ENCODE measurements at regions of chr14 and their contacts with region 1.

Region 1: GRCh38 chr14:64294672-64295413 is 672 bp upstream of the ESR2 start:
- DNase-seq: peak; percentile 42 to 72
- ATAC-seq: peak; percentile 84 to 90
- H3K4me3 ChIP-seq: peak overlapping the region; percentile 43 to 61 (median 50)
- H3K27ac ChIP-seq: peak overlapping the region in 1 of 4 donors; percentile 27
- H3K4me1 ChIP-seq: peaks cover 9 to 10% of the 10 kb centered on the region in 2 donors
- H3K27me3 ChIP-seq: no peaks in the 10 kb centered on the region
- CTCF ChIP-seq: peak; percentile 59 to 92 (median 87)
- POLR2A ChIP-seq: no peak

Region 2: DNA sequence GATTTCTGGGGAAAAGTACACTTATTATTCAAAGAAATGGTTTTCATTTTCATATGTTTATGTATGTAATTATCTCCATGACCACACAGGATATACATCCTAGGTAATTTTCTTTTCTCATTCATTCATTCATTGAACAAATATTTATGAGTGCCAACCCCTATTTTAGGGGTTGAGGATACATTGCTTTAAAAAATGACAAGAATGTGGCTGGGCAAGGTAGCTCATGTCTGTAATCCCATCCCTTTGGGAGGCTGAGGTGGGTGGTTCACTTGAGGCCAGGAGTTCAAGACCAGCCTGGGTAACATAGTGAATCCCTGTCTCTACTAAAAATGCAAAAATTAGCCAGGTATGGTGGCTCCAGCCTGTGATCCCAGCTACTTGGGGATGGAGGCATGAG is 607.9 kb before region 1 on chr14:
- in situ Hi-C with region 1: no loop called
- intact Hi-C with region 1: no loop called
- DNase-seq: no peak
- ATAC-seq: no peak
- H3K4me3 ChIP-seq: no peak overlapping the region
- H3K27ac ChIP-seq: no peak overlapping the region
- H3K4me1 ChIP-seq: no peaks in the 10 kb centered on the region
- H3K27me3 ChIP-seq: no peaks in the 10 kb centered on the region
- CTCF ChIP-seq: no peak
- POLR2A ChIP-seq: no peak

Region 3: GRCh38 chr14:64012720-64013119 is 282.1 kb before region 1 on chr14:
- in situ Hi-C with region 1: no loop called
- intact Hi-C with region 1: loop called (anchors 5 kb)
- DNase-seq: no peak
- ATAC-seq: no peak
- H3K4me3 ChIP-seq: no peak overlapping the region
- H3K27ac ChIP-seq: no peak overlapping the region
- H3K4me1 ChIP-seq: no peaks in the 10 kb centered on the region
- H3K27me3 ChIP-seq: no peaks in the 10 kb centered on the region
- CTCF ChIP-seq: no peak
- POLR2A ChIP-seq: no peak

Region 4: GRCh38 chr14:64040044-64040443 is 254.8 kb before region 1 on chr14:
- in situ Hi-C with region 1: loop called in 3 of 4 experiments (anchors 25 kb)
- intact Hi-C with region 1: no loop called
- DNase-seq: no peak
- ATAC-seq: no peak
- H3K4me3 ChIP-seq: no peak overlapping the region
- H3K27ac ChIP-seq: no peak overlapping the region
- H3K4me1 ChIP-seq: no peaks in the 10 kb centered on the region
- H3K27me3 ChIP-seq: no peaks in the 10 kb centered on the region
- CTCF ChIP-seq: peak in 2 of 5 experiments; percentile 22
- POLR2A ChIP-seq: no peak

Region 5: DNA sequence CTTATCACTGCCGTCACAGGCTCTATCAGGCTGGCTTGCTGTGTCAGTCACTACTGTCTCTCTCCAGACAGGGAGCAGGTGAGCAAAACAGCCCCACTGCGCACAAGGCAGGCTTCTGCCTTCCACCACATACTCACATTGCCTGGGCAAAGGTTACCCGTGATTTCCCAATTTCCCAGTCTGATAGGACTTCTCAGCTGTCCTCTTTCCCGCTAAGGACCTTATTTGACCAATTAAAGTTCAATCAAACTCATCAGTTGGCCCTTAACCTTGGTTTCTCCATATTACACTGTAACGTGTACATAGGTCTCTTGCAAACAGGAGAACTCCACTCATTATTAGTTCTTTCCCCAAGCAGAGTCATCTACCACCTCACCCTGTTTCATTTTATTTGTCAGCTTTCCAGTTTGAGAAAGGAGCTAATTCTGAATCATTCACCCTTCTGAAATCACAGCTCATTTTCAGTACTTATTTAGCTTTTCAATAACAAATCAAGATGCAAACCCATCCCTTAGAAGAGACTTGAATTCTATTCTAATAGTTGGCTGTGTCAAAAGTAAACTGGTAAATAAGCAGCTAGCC is 171.5 kb before region 1 on chr14:
- in situ Hi-C with region 1: no loop called
- intact Hi-C with region 1: loop called (anchors 10 kb)
- DNase-seq: no peak
- ATAC-seq: no peak
- H3K4me3 ChIP-seq: no peak overlapping the region
- H3K27ac ChIP-seq: no peak overlapping the region
- H3K4me1 ChIP-seq: peaks cover 10 to 11% of the 10 kb centered on the region in 2 donors
- H3K27me3 ChIP-seq: no peaks in the 10 kb centered on the region
- CTCF ChIP-seq: no peak
- POLR2A ChIP-seq: no peak

Region 6: DNA sequence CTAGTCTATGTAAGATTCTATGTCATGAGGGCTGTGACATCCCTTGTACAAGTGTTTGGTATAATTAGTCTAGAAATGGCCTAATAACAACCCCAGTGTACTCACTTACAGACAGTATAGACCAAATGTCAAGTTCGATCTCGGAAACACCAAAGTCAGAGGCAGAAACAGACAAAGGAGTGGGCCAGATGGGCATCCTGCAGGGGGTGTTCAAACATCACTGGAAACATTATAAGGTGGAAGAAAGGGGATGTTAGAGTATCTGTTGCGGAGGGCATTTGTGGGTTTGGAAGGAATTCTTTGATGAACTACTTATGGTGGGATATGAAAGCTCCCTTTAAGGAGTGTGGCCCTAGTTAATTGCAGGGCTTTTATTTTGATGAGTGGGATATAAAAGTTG is 135.3 kb before region 1 on chr14:
- in situ Hi-C with region 1: loop called in 3 of 4 experiments (anchors 10 to 25 kb)
- intact Hi-C with region 1: no loop called
- DNase-seq: no peak
- ATAC-seq: peak in 1 of 2 donors; percentile 36
- H3K4me3 ChIP-seq: no peak overlapping the region
- H3K27ac ChIP-seq: no peak overlapping the region
- H3K4me1 ChIP-seq: no peaks in the 10 kb centered on the region
- H3K27me3 ChIP-seq: no peaks in the 10 kb centered on the region
- CTCF ChIP-seq: peak in 1 of 5 experiments; percentile 21
- POLR2A ChIP-seq: no peak

Region 7: DNA sequence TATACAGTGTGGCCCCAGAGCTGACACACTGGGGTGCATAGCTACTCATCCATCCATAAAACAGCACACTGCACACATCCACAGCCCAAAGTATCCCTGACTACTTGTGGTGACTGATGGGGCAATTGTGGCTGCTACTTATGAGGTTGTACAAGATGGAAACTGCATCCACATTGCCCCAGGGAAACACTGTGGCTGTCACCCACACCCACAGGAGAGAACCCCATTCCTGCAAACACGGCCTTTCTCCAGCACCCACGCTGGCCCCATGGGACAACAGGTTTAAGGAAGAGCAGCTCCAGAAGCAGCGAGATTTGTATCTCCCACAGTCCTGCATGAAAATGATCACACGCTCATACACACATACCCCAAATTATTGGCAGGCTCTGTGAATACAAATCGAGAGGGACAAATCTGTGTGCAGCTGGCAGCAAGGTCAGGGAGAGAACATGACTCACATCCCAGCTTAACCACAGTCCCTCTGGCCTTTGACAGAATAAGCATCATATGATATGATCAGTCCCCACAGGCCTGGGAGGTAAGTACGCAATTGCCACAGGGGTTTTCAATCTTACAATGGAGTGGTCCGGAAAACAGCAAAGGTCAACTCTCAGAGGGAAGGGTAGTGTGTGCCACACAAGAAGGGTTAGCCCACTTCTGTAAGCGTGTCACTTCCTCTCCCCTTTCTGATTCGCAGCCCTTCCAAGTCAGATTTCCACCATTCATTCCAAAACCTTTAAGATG is 62.6 kb before region 1 on chr14:
- in situ Hi-C with region 1: no loop called
- intact Hi-C with region 1: loop called (anchors 5 kb)
- DNase-seq: peak; percentile 61 to 81
- ATAC-seq: peak; percentile 88 to 93
- H3K4me3 ChIP-seq: no peak overlapping the region
- H3K27ac ChIP-seq: peak overlapping the region; percentile 86 to 99 (median 92)
- H3K4me1 ChIP-seq: peaks cover 9 to 18% of the 10 kb centered on the region in 2 donors
- H3K27me3 ChIP-seq: no peaks in the 10 kb centered on the region
- CTCF ChIP-seq: no peak
- POLR2A ChIP-seq: peak in 1 of 2 donors; percentile 34